IMR-90 (cell line): ENCODE measurements at regions of chr15 and their contacts with region 1.

Region 1: GRCh38 chr15:78904599-78905358 is 32.1 kb downstream of the MORF4L1 start:
- DNase-seq: no peak
- ATAC-seq: no peak
- H3K4me3 ChIP-seq: no peak overlapping the region
- H3K27ac ChIP-seq: peak overlapping the region; percentile 41; the same call in 1 of the 2 replicates
- H3K4me1 ChIP-seq: peaks cover 20% of the 10 kb centered on the region
- H3K27me3 ChIP-seq: no peaks in the 10 kb centered on the region
- CTCF ChIP-seq: no peak
- POLR2A ChIP-seq: no peak
- RAD21 ChIP-seq: no peak

Region 2: GRCh38 chr15:78893538-78893937 is 11.2 kb before region 1 on chr15:
- CTCF ChIA-PET with region 1: no interaction called
- POLR2A ChIA-PET with region 1: interaction called, 12 read pairs
- dilution Hi-C with region 1: no loop called
- in situ Hi-C with region 1: no loop called
- intact Hi-C with region 1: loop called (anchors 1 kb)
- DNase-seq: no peak
- ATAC-seq: no peak; the same call in 1 of the 2 replicates
- H3K4me3 ChIP-seq: no peak overlapping the region
- H3K27ac ChIP-seq: no peak overlapping the region
- H3K4me1 ChIP-seq: peaks cover 3% of the 10 kb centered on the region
- H3K27me3 ChIP-seq: no peaks in the 10 kb centered on the region
- CTCF ChIP-seq: no peak
- POLR2A ChIP-seq: no peak
- RAD21 ChIP-seq: no peak